ENCODE measurements at regions of chr5 and their contacts with region 1.

Region 1: DNA sequence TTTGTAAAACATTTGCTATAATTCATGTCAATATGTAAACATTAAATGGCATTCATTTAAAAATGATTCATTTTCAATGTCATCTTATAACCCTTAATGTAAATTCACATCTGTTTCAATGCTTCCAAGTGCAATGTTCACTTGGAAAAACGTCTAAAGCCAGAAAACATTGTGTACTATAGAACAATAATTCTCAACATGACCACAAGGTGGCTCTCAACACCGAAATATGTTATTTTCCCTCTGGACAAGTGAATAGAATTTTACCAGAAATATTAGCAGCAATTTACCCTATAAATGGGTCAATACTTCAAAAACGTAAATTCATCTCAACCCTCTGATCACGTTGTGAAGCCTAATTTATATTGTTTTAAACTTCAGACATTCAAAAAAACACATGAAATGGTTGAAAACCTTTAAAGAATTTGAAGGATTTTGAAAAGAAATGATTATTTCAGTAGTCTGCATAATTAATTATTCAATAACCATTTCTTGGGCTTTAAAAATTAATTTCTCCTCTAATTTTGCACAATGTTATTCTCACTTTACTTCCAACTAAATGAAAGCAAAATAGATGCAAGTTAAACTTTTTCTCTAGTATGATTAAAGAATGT is 11.0 kb downstream of the CDH10 start:
- DNase-seq: no peak
- H3K4me3 ChIP-seq: no peak overlapping the region
- CTCF ChIP-seq: peak; percentile 33

Region 2: GRCh38 chr5:25006737-25007302 is 373.0 kb after region 1 on chr5:
- CTCF ChIA-PET with region 1: interaction called, 24 read pairs
- POLR2A ChIA-PET with region 1: no interaction called
- DNase-seq: peak; percentile 33
- H3K4me3 ChIP-seq: no peak overlapping the region
- CTCF ChIP-seq: peak; percentile 35